Activated CD4-positive, alpha-beta T cell treated with anti-CD3 and anti-CD28 coated beads for 36 hours (primary cell): ENCODE measurements at regions of chr9 and their contacts with region 1.

Region 1: GRCh38 chr9:93143830-93144530 is 9.9 kb upstream of the NINJ1 start:
- DNase-seq: peak; percentile 60
- ATAC-seq: peak; percentile 57
- H3K4me3 Mint-ChIP-seq: no peak overlapping the region
- H3K27ac Mint-ChIP-seq: peak overlapping the region; percentile 91
- H3K4me1 Mint-ChIP-seq: peaks cover 64% of the 10 kb centered on the region
- H3K27me3 Mint-ChIP-seq: no peaks in the 10 kb centered on the region

Region 2: DNA sequence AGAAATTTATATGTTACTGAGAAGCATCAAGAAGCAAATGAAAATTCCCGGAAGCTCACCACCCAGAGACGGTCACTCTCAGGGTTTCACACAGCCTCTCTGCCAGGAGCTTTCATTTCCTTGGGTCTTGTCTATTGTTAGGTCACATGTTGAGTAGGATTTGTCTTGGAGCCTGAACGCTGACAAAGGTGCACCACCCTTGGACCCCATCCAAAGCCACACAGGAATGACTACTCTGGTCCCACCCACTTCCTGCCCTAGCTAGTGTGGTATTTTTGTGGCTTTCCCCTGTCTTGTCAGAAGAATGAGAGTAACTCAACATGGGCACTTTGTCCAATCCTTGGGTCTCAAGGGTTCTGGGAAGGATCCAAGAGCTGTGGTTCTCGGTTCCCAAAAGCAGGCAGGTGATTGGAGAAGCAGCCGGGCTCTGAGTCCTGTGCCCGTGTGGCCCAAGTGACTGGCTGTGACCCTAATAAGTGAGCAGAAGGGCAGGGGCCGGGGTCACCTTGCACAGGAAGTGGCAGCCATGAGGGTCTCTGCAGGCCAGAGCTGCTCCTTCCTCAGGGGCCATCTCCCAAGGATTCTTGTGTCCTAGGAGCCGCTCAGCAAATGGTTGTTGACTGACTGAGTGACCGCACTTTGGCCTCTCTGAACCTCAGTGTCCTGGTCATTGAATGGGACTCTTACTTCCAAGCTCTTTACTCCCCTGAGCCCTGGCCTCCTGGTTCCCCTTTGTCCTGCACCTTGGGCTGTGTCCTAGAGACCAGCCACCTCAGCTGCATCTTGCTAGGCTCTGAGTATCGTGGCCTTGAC is 189.7 kb before region 1 on chr9:
- CTCF ChIA-PET with region 1: no interaction called
- POLR2A ChIA-PET with region 1: no interaction called
- intact Hi-C with region 1: loop called in 1 of 2 experiments (anchors 2 kb)
- DNase-seq: peak; percentile 89
- ATAC-seq: peak; percentile 85
- H3K4me3 Mint-ChIP-seq: peak overlapping the region; percentile 66
- H3K27ac Mint-ChIP-seq: peak overlapping the region; percentile 97
- H3K4me1 Mint-ChIP-seq: peaks cover 78% of the 10 kb centered on the region
- H3K27me3 Mint-ChIP-seq: no peaks in the 10 kb centered on the region

Region 3: GRCh38 chr9:92986176-92987085 is 157.5 kb before region 1 on chr9:
- CTCF ChIA-PET with region 1: interaction called, 5 read pairs
- POLR2A ChIA-PET with region 1: no interaction called
- intact Hi-C with region 1: loop called in 1 of 2 experiments (anchors 5 kb)
- DNase-seq: peak; percentile 69
- ATAC-seq: no peak
- H3K4me3 Mint-ChIP-seq: no peak overlapping the region
- H3K27ac Mint-ChIP-seq: peak overlapping the region; percentile 87
- H3K4me1 Mint-ChIP-seq: peaks cover 76% of the 10 kb centered on the region
- H3K27me3 Mint-ChIP-seq: no peaks in the 10 kb centered on the region

Region 4: GRCh38 chr9:93154315-93154903 is 10.4 kb after region 1 on chr9:
- CTCF ChIA-PET with region 1: interaction called, 7 read pairs
- POLR2A ChIA-PET with region 1: no interaction called
- intact Hi-C with region 1: loop called in 1 of 2 experiments (anchors 1 kb)
- DNase-seq: peak; percentile 76
- ATAC-seq: peak; percentile 24
- H3K4me3 Mint-ChIP-seq: no peak overlapping the region
- H3K27ac Mint-ChIP-seq: no peak overlapping the region
- H3K4me1 Mint-ChIP-seq: peaks cover 28% of the 10 kb centered on the region
- H3K27me3 Mint-ChIP-seq: no peaks in the 10 kb centered on the region

Region 5: GRCh38 chr9:93207326-93207814 is 63.4 kb after region 1 on chr9:
- CTCF ChIA-PET with region 1: no interaction called
- POLR2A ChIA-PET with region 1: no interaction called
- intact Hi-C with region 1: no loop called
- DNase-seq: no peak
- ATAC-seq: no peak
- H3K4me3 Mint-ChIP-seq: no peak overlapping the region
- H3K27ac Mint-ChIP-seq: no peak overlapping the region
- H3K4me1 Mint-ChIP-seq: no peaks in the 10 kb centered on the region
- H3K27me3 Mint-ChIP-seq: no peaks in the 10 kb centered on the region